ENCODE measurements at regions of chr14 and their contacts with region 1.

Region 1: DNA sequence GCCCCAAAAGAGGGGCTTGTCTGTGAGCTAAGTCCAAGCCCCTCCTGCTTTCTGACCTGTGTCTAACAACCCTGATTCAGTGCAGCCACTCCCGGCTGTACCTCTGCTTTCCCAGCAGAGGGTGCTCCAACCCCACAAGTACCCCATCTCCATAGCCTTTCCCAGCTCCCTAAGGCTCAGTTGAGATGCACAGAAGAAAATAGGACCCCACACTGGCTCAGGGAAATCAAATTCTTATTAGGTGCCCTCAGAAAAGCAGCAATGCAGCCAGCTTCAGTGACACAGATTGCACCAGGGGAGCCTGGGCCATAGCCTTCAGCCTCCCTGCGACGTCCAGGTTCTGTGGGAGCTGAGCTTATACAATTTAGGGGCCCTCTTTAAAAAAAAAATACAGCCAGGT is 49.9 kb downstream of the LRRC74A start:
- DNase-seq: peak; percentile 52 to 69
- H3K4me3 ChIP-seq: no peak overlapping the region
- H3K27ac ChIP-seq: no peak overlapping the region
- H3K4me1 ChIP-seq: no peaks in the 10 kb centered on the region
- H3K27me3 ChIP-seq: no peaks in the 10 kb centered on the region
- CTCF ChIP-seq: peak; percentile 90 to 96 (median 93)
- POLR2A ChIP-seq: no peak

Region 2: GRCh38 chr14:77067632-77068514 is 191.8 kb after region 1 on chr14:
- intact Hi-C with region 1: loop called (anchors 5 kb)
- DNase-seq: peak; percentile 69 to 72
- H3K4me3 ChIP-seq: no peak overlapping the region
- H3K27ac ChIP-seq: peak overlapping the region; percentile 5 to 87
- H3K4me1 ChIP-seq: peaks cover 0 to 8% of the 10 kb centered on the region in 2 donors
- H3K27me3 ChIP-seq: no peaks in the 10 kb centered on the region
- CTCF ChIP-seq: peak; percentile 82 to 89 (median 84)
- POLR2A ChIP-seq: no peak

Measured in uterus (tissue), 4 donors.